ENCODE measurements at regions of chr16 and their contacts with region 1.

Region 1: DNA sequence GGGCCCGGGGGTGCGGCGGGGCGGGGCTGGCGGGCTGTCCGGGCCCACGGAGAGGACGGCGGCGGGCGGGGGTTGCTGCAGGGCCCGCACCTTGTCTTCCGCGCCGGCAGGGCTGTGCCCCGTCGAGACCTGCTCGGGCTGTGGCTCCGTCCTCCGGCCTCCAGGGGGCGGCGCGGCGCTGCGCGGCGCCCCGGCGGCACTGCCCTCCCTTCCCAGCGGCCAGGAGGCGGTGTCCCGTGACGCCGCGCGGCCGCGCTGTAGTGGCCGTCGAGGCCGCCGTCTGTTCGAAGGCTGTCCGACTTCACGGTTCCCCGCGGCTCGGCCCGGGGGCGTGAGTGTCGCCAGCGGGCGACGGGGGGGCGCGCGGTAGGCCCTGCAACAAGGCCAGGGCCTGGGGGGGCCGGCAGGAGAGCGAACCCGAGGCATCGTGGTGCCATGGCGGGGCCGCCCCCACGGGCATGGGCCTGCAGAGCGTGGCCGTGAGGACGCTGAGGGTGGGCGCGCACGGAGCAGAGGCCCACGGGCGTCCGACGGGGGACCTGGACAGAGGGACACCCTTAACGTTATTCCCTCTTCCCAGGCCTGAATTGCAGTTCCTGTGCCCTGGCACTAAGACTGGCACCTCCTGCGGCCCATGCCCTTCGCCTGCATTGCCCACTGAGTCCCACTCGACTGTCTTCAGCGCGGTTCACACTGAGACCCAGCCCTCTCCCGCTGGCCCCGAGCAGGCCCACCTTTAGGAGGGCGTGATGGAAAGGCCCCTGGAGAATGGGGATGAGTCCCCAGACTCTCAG is at the start of gene PLEKHG4:
- DNase-seq: peak; percentile 65 to 92 (median 76)
- ATAC-seq: peak; percentile 97
- H3K4me3 ChIP-seq: peak within 1 kb of the TSS; percentile 74
- H3K4me3 Mint-ChIP-seq: peak within 1 kb of the TSS; percentile 88
- H3K27ac ChIP-seq: peak within 1 kb of the TSS in 1 of 2 donors; percentile 27
- H3K27ac Mint-ChIP-seq: peak within 1 kb of the TSS; percentile 64
- H3K4me1 ChIP-seq: peaks cover 27% of the 10 kb centered on the region
- H3K4me1 Mint-ChIP-seq: peaks cover 17% of the 10 kb centered on the region
- H3K27me3 ChIP-seq: no peaks in the 10 kb centered on the region
- H3K27me3 Mint-ChIP-seq: no peaks in the 10 kb centered on the region
- CTCF ChIP-seq: peak; percentile 55
- total RNA-seq, gene PLEKHG4: 13.1 to 14.0 TPM

Region 2: GRCh38 chr16:67109407-67110135 is 169.9 kb before region 1 on chr16 and contains the start of gene PHAF1:
- CTCF ChIA-PET with region 1: no interaction called
- POLR2A ChIA-PET with region 1: no interaction called
- intact Hi-C with region 1: no loop called
- DNase-seq: peak; percentile 92 to 98 (median 96)
- ATAC-seq: peak; percentile 88
- H3K4me3 ChIP-seq: peak within 1 kb of the TSS; percentile 88
- H3K4me3 Mint-ChIP-seq: peak within 1 kb of the TSS; percentile 96
- H3K27ac ChIP-seq: peak within 1 kb of the TSS; percentile 26 to 29
- H3K27ac Mint-ChIP-seq: peak within 1 kb of the TSS; percentile 84
- H3K4me1 ChIP-seq: peaks cover 24% of the 10 kb centered on the region
- H3K4me1 Mint-ChIP-seq: peaks cover 26% of the 10 kb centered on the region
- H3K27me3 ChIP-seq: no peaks in the 10 kb centered on the region
- H3K27me3 Mint-ChIP-seq: no peaks in the 10 kb centered on the region
- CTCF ChIP-seq: no peak
- total RNA-seq, gene PHAF1: 10.6 to 10.8 TPM

Region 3: GRCh38 chr16:67294938-67295361 is 15.5 kb after region 1 on chr16:
- CTCF ChIA-PET with region 1: no interaction called
- POLR2A ChIA-PET with region 1: no interaction called
- intact Hi-C with region 1: loop called in 1 of 2 experiments (anchors 1 kb)
- DNase-seq: no peak
- ATAC-seq: no peak
- H3K4me3 ChIP-seq: no peak overlapping the region
- H3K4me3 Mint-ChIP-seq: no peak overlapping the region
- H3K27ac ChIP-seq: no peak overlapping the region
- H3K27ac Mint-ChIP-seq: no peak overlapping the region
- H3K4me1 ChIP-seq: peaks cover 8% of the 10 kb centered on the region
- H3K4me1 Mint-ChIP-seq: no peaks in the 10 kb centered on the region
- H3K27me3 ChIP-seq: peaks cover 0 to 5% of the 10 kb centered on the region in 2 experiments
- H3K27me3 Mint-ChIP-seq: no peaks in the 10 kb centered on the region
- CTCF ChIP-seq: no peak

Region 4: DNA sequence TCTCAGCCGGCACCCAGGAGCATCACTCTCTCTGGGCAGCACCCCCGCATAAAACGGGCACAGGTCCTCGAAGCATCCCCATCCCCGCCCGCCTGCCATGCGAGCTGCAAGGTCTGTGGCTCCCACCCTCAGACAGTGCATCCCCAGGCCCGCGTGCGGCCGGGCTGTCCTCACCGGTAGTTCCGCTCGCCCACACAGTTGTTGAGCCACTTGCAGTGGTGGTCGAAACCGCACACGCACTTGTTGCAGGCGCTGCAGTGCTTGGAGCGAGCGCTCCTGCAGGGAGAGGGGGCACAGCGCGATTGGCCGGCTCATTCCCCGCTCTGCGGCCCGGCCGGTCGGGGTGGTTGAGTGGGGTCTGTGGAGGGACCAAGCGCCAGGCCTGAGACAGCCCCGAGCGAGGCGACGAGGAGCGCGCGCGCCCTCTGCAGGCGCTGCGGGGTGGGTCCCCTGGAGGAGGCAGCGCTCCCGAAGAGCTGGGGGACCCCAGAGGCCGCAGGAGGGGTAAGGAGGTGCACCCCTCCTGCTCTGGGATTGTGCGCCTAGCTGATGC is 119.8 kb after region 1 on chr16:
- CTCF ChIA-PET with region 1: no interaction called
- POLR2A ChIA-PET with region 1: no interaction called
- intact Hi-C with region 1: loop called in 1 of 2 experiments (anchors 5 kb)
- DNase-seq: peak in 10 of 14 experiments; percentile 22 to 68 (median 30)
- ATAC-seq: peak; percentile 70
- H3K4me3 ChIP-seq: no peak overlapping the region
- H3K4me3 Mint-ChIP-seq: no peak overlapping the region
- H3K27ac ChIP-seq: no peak overlapping the region
- H3K27ac Mint-ChIP-seq: no peak overlapping the region
- H3K4me1 ChIP-seq: peaks cover 16% of the 10 kb centered on the region
- H3K4me1 Mint-ChIP-seq: peaks cover 2% of the 10 kb centered on the region
- H3K27me3 ChIP-seq: peaks cover 22 to 24% of the 10 kb centered on the region in 2 experiments
- H3K27me3 Mint-ChIP-seq: peaks cover 27% of the 10 kb centered on the region
- CTCF ChIP-seq: peak; percentile 57

Region 5: DNA sequence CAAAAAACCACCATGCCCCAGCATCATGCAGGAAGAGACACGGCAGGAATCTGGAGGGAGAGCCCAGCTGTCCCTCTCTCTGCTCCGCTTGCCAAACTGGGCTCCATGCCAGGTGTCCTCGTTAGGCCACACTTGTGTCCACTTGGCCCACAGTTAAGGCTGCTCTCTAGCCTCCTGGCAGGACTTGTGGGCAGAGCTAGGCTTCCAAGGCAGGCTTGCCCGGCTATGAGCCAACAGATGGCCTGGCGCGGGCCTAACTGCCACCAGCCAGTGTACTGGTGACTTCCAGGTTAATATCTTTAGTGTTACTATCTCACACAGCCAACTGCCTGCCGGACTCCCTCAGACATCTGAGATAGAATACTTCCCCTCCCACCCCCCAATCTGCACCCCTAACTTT is 190.9 kb after region 1 on chr16:
- CTCF ChIA-PET with region 1: no interaction called
- POLR2A ChIA-PET with region 1: no interaction called
- intact Hi-C with region 1: loop called in 1 of 2 experiments (anchors 10 kb)
- DNase-seq: no peak
- ATAC-seq: no peak
- H3K4me3 ChIP-seq: no peak overlapping the region
- H3K4me3 Mint-ChIP-seq: no peak overlapping the region
- H3K27ac ChIP-seq: no peak overlapping the region
- H3K27ac Mint-ChIP-seq: no peak overlapping the region
- H3K4me1 ChIP-seq: peaks cover 28% of the 10 kb centered on the region
- H3K4me1 Mint-ChIP-seq: peaks cover 53% of the 10 kb centered on the region
- H3K27me3 ChIP-seq: no peaks in the 10 kb centered on the region
- H3K27me3 Mint-ChIP-seq: no peaks in the 10 kb centered on the region
- CTCF ChIP-seq: no peak